AG04449 (cell line): ENCODE measurements at regions of chr10 and their contacts with region 1.

Region 1: GRCh38 chr10:102678842-102679289 is 34.6 kb downstream of the TRIM8 start:
- DNase-seq: no peak
- H3K4me3 ChIP-seq: no peak overlapping the region
- CTCF ChIP-seq: peak; percentile 79

Region 2: DNA sequence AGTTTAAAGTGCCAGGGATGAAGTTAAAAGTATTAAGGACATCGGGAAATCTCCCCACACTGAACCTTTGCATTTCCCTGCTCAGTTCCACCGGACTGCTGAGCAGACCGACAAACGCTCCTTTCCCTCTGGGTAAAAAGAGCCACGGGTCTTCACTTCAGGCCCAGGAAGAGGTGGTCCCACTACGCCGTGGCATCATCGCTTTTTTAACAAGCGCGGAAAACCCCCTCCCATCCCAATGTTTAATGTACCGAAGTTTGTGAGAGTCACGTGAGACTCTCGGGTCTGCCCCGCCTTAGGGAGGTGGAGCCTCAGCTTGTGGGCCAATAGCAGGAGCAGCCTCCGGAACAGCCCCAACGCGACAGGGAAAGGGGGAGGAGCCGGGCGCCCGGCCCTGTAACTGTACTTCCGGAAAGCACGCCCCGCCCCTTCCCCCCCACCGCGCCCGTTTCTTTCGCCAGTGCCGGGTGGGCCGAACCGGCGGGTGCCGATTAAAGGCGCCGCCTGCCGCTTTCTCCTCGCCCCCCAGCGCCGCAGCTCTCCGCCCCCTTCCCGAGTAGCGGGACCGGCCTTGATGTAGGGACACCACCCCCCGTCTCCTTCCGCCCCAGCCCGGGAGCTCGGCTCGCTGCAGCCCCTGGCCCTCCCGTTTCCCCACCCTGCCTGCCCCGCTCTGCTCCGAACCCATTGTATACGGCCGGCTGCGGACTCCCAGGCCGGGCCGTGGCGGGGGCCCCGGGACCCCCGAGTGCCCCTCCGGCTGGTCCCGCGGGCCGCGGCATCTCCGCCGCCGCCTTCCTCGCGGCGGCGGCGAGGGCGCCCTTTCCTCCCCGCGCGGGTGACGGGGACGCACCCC is 36.8 kb before region 1 on chr10:
- CTCF ChIA-PET with region 1: interaction called, 6 read pairs
- POLR2A ChIA-PET with region 1: interaction called, 35 read pairs
- DNase-seq: peak; percentile 87
- H3K4me3 ChIP-seq: peak overlapping the region; percentile 91
- CTCF ChIP-seq: no peak

Region 3: GRCh38 chr10:102660888-102661657 is 17.8 kb before region 1 on chr10:
- CTCF ChIA-PET with region 1: interaction called, 55 read pairs
- POLR2A ChIA-PET with region 1: interaction called, 6 read pairs
- DNase-seq: no peak
- H3K4me3 ChIP-seq: no peak overlapping the region
- CTCF ChIP-seq: no peak

Region 4: DNA sequence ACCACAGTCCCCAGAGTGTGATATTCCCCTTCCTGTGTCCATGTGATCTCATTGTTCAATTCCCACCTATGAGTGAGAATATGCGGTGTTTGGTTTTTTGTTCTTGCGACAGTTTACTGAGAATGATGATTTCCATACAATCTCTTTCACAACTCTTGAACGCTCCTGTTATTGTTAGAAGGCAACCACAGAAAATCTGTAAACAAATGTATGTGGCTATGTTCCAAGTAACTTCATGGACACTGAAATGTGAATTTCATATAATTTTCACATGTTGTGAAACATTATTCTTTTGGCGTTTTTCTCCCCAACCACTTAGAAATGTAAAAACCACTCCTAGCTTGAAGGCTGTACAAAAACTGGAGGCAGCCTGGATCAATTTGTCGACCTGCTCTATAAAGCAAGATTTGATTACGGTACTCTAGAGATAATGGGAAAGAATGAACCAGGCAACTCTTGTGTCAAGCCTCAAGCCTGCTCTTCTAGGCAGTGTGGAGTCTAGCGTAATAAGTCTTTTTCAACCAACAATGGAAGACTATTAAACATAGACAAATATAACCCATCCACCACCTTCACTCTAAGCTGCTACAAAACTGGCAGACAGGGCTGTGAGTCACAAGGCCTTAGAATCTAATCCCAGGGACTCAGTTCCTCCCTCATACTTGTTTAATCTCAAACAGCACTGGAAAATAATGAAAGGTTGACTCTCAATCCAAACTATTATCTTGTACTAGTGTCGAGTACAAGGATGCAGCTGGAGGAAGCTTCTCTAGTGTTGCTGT is 12.6 kb after region 1 on chr10:
- CTCF ChIA-PET with region 1: interaction called, 95 read pairs
- POLR2A ChIA-PET with region 1: no interaction called
- DNase-seq: no peak
- H3K4me3 ChIP-seq: no peak overlapping the region
- CTCF ChIP-seq: no peak

Region 5: GRCh38 chr10:102698894-102699293 is 20.0 kb after region 1 on chr10:
- CTCF ChIA-PET with region 1: interaction called, 95 read pairs
- POLR2A ChIA-PET with region 1: no interaction called
- DNase-seq: no peak
- H3K4me3 ChIP-seq: no peak overlapping the region
- CTCF ChIP-seq: no peak

Region 6: GRCh38 chr10:102704915-102705314 is 26.0 kb after region 1 on chr10:
- CTCF ChIA-PET with region 1: interaction called, 66 read pairs
- POLR2A ChIA-PET with region 1: interaction called, 5 read pairs
- DNase-seq: no peak
- H3K4me3 ChIP-seq: no peak overlapping the region
- CTCF ChIP-seq: no peak

Region 7: GRCh38 chr10:102713814-102714620 is 35.2 kb after region 1 on chr10 and contains the start of gene ARL3:
- CTCF ChIA-PET with region 1: interaction called, 66 read pairs
- POLR2A ChIA-PET with region 1: interaction called, 14 read pairs
- DNase-seq: peak; percentile 82
- H3K4me3 ChIP-seq: peak within 1 kb of the TSS; percentile 93
- CTCF ChIP-seq: peak; percentile 77

Region 8: DNA sequence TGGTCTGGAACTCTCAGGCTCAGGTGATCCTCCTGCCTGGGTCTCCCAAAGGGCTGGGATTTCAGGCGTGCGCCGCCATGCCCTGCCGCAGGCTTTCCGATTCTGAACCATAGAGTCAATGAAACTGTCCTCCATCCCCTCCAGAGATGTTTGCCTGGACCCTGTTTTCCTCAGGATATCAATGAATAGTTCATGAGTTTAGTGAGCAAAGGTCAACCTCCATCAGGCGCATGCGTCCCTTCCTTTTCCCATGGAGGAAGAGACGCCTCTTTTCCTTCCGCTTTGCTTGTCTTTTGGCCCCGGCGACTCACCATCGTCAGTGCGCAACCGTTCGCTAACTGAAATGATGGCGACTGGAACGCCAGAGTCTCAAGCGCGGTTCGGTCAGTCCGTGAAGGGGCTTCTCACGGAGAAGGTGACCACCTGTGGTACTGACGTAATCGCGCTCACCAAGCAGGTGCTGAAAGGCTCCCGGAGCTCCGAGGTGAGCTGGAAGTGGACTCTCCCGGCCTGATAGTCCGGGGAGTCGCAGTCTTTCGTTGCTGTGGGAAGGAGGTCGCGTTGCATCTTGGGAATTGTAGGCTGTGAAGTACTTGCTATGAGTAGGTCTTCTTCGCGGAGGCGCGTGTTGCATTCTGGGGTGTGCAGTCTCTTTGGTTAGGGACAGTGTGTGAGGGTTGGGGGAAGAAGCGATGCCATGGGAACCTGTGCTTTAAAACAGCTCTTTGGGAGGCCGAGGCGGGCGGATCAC is 175.3 kb after region 1 on chr10 and contains the start of gene BORCS7:
- CTCF ChIA-PET with region 1: no interaction called
- POLR2A ChIA-PET with region 1: no interaction called
- DNase-seq: peak; percentile 85
- H3K4me3 ChIP-seq: peak within 1 kb of the TSS; percentile 98
- CTCF ChIP-seq: no peak